Activated naive CD4-positive, alpha-beta T cell treated with anti-CD3 and anti-CD28 coated beads for 36 hours (primary cell): ENCODE measurements at regions of chr12 and their contacts with region 1.

Region 1: GRCh38 chr12:120012067-120012621 is 23.1 kb downstream of the BICDL1 start:
- DNase-seq: peak; percentile 94
- H3K4me3 Mint-ChIP-seq: peak overlapping the region; percentile 73
- H3K27ac Mint-ChIP-seq: peak overlapping the region; percentile 97
- H3K4me1 Mint-ChIP-seq: peaks cover 87% of the 10 kb centered on the region
- H3K27me3 Mint-ChIP-seq: no peaks in the 10 kb centered on the region

Region 2: DNA sequence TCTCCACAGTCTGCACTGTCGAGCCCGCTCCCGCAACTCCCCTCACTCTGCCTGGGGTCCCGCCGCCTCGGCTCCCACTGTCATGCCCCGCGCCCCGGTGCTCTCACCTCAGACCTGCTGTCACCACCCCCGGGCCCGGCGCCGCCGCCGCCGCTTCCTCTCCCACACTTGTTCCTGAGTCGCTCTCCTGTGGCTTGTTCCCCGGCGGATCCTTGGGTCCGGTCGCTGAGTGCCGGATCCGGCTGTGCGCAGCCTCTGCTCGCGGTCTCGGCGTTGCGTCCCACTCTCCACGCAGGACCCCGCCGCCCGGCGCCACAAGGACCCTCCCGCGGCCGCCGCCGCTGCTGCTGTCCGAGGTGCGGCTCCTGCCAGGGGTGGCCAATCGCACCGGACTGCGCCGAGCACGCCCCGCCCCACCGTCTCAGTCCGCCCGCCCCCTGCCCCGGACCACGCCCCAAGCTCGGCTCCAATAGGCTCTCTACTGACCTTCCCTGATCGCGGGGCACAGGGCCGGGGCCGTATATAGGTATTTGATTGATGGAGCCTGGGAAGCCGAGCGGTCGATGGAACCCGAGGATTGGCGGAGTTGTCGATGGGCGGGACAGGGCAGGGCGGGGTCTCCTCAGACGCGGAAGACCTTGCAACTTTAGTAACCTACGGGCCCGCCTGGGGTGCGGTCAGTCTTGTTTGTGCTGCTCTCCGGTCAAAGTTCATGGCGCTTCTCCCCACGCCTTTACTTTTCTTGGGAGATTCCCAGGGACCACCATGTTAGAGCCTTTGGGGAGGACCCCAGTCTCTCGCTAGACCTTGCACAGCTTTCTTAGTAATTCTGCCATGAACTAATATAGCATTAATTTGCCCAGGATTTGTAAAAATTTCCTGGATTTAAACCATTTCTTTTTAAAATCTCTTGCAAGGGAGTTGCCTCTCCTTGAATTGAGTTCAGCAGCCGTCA is 1639.3 kb before region 1 on chr12 and contains the start of gene TAOK3:
- CTCF ChIA-PET with region 1: no interaction called
- intact Hi-C with region 1: loop called (anchors 10 kb)
- DNase-seq: peak; percentile 98
- H3K4me3 Mint-ChIP-seq: peak within 1 kb of the TSS; percentile 95
- H3K27ac Mint-ChIP-seq: peak within 1 kb of the TSS; percentile 89
- H3K4me1 Mint-ChIP-seq: peaks cover 40% of the 10 kb centered on the region
- H3K27me3 Mint-ChIP-seq: no peaks in the 10 kb centered on the region
- total RNA-seq, gene TAOK3: 49.1 to 49.2 TPM

Region 3: GRCh38 chr12:119980242-119980641 is 31.9 kb before region 1 on chr12:
- CTCF ChIA-PET with region 1: interaction called, 4 read pairs
- intact Hi-C with region 1: loop called (anchors 1 kb)
- DNase-seq: peak; percentile 43
- H3K4me3 Mint-ChIP-seq: peak overlapping the region; percentile 54
- H3K27ac Mint-ChIP-seq: peak overlapping the region; percentile 84
- H3K4me1 Mint-ChIP-seq: peaks cover 17% of the 10 kb centered on the region
- H3K27me3 Mint-ChIP-seq: no peaks in the 10 kb centered on the region

Region 4: DNA sequence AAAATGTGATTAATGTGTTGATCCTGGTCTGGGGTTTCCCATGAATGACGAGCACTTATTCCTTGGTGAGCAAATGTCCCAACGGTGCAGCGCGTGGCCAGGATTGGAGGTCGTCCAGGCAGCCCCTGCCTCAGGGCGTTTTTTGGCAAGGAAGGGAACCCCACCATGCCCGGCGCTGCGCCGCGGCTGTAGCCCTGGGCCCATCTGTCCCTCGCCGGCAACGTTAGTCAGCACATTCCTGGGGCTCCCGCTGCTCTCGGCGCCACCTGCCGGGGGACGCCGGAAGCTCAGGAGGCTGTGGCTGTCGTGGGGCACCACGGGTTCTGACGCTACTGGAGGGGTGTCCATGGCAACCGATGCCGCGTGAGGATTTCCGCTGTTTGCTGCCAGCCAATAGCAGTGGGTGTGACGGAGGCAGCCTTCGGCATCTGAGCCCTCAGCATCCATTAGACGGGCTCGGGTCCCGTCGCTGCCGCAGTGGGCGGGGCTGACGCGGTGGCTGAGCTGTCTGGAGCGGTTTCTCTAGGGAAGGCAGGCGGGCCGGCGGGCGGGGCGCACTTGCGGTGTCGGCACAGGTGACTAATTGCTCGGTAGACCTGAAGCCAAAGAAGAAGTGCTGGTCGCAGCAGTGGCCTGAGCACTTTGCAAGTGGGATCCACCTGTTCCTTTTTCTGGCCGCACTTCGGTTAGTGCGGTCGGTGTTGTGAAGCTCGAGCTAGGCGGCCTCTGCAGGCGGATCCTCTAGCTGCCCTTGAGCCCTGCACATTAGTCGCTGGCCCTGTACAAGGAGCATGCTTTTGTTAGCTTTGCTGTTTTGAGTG is 74.9 kb after region 1 on chr12:
- CTCF ChIA-PET with region 1: interaction called, 12 read pairs
- intact Hi-C with region 1: loop called (anchors 1 kb)
- DNase-seq: peak; percentile 100
- H3K4me3 Mint-ChIP-seq: peak overlapping the region; percentile 63
- H3K27ac Mint-ChIP-seq: peak overlapping the region; percentile 85
- H3K4me1 Mint-ChIP-seq: peaks cover 41% of the 10 kb centered on the region
- H3K27me3 Mint-ChIP-seq: no peaks in the 10 kb centered on the region

Region 5: DNA sequence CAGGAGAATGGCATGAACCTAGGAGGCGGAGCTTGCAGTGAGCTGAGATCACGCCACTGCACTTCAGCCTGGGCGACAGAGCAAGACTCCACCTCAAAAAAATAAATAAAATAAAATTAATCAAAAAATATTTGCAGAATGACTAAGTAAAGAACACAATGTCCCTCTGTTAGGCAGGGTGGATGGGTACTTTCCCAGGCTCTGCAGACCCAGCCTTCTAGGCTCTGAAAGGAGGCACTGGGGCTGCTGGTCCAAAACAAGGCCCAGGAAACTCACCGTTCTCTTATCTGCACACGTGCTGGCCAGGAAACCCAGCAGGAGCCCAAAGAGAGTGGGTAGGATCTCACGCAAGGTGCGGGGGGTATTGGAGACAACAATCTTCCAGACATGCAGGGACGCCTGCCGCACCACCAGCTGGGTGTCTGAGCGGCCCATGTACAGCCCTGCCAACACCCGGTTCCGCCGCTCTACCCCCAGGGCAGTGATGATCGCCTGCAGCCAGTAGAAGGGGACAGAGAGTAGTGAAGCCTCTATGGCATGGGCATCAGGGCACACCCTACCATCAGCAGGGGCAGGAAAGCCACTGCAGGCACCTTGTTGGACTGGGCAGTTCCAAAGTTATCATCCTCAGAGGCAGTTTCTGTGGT is 130.2 kb after region 1 on chr12:
- CTCF ChIA-PET with region 1: no interaction called
- intact Hi-C with region 1: no loop called
- DNase-seq: no peak
- H3K4me3 Mint-ChIP-seq: no peak overlapping the region
- H3K27ac Mint-ChIP-seq: no peak overlapping the region
- H3K4me1 Mint-ChIP-seq: no peaks in the 10 kb centered on the region
- H3K27me3 Mint-ChIP-seq: no peaks in the 10 kb centered on the region

Region 6: DNA sequence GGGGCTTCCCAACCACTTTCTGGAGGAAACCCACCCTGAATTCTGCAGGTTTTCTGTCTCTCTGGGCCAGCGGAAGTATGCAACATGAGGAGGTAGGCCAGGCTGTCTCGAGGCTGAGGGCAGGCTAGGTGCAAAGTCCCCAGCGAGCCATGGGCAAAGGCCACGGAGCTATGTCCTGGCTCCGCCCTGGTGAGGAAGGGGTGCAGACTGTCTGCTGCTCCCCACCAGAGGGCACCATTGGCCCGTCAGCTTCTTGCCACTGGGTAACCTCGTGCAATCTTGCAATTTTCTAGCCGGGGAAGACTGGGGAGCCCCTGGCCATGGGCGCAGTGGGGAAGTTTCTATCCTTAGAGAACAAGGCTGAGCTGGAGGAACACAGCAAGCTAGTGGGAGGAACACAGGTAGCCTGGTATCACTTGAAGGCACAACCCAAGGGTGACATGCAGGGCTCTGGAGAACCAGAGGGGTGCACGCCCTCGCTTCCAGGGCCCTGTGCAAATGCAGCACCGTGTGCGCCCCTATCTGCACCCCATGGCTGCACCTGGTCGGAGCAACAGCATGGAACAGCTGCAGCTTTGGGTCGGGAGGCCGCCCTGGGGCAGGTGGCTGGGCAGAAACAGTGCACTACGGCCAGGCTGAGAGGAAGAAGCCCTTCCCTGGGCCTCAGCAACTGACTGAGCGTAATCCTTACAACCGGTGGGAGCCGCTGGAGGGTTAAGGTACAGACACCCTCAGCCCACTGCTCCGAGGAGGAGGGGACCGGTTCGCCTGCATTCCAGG is 216.3 kb after region 1 on chr12:
- CTCF ChIA-PET with region 1: no interaction called
- intact Hi-C with region 1: loop called (anchors 1 kb)
- DNase-seq: peak; percentile 96
- H3K4me3 Mint-ChIP-seq: peak overlapping the region; percentile 49
- H3K27ac Mint-ChIP-seq: peak overlapping the region; percentile 84
- H3K4me1 Mint-ChIP-seq: peaks cover 88% of the 10 kb centered on the region
- H3K27me3 Mint-ChIP-seq: no peaks in the 10 kb centered on the region

Region 7: DNA sequence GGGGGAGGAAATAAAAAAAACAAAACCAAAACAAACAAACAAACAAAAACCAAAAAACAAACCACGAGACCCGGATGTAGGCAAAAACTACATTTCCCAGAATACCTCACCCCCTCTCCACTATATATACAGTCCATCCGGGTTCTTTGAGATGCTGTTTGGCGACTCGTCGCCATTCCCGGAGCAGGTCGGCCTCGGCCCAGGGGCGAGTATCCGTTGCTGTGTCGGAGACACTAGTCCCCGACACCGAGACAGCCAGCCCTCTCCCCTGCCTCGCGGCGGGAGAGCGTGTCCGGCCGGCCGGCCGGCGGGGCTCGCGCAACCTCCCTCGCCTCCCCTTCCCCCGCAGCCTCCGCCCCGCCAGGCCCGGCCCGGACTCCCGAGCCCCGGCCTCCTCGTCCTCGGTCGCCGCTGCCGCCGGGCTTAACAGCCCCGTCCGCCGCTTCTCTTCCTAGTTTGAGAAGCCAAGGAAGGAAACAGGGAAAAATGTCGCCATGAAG is 522.1 kb after region 1 on chr12 and contains the start of gene RNF10:
- CTCF ChIA-PET with region 1: no interaction called
- intact Hi-C with region 1: loop called (anchors 10 kb)
- DNase-seq: peak; percentile 78
- H3K4me3 Mint-ChIP-seq: peak within 1 kb of the TSS; percentile 92
- H3K27ac Mint-ChIP-seq: peak within 1 kb of the TSS; percentile 94
- H3K4me1 Mint-ChIP-seq: peaks cover 47% of the 10 kb centered on the region
- H3K27me3 Mint-ChIP-seq: no peaks in the 10 kb centered on the region
- total RNA-seq, gene RNF10: 159 to 166 TPM